ENCODE measurements at regions of chr19 and their contacts with region 1.

Region 1: GRCh38 chr19:40640744-40641143 is 39.6 kb downstream of the LTBP4 start:
- DNase-seq: peak; percentile 71
- H3K4me3 ChIP-seq: no peak overlapping the region
- H3K27ac ChIP-seq: peak overlapping the region; percentile 46 to 70 (median 56)
- H3K4me1 ChIP-seq: peaks cover 0 to 23% (median 17%) of the 10 kb centered on the region in 4 donors
- H3K27me3 ChIP-seq: no peaks in the 10 kb centered on the region
- CTCF ChIP-seq: no peak
- EP300 ChIP-seq: no peak
- POLR2A ChIP-seq: no peak

Region 2: DNA sequence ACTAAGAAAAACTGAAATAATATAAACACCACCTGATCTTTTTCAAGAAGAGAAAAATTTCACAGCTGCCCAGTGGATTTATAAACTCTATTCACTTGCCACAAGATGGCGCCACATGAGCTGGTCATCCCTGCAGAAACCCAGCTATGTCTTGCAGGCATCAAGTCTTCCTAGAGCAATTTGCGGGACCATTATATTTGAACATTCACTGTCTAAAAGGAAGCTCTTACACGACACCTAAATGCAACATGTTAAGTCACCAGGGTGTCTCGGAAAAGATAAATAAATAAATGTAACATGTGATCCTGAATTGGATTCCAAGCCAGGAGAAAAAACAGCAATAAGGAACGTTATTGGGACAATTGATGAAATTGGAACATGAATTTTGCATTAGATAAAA is 335.3 kb before region 1 on chr19:
- intact Hi-C with region 1: loop called (anchors 2 kb)
- DNase-seq: peak; percentile 89
- H3K4me3 ChIP-seq: no peak overlapping the region
- H3K27ac ChIP-seq: no peak overlapping the region
- H3K4me1 ChIP-seq: peaks cover 0 to 3% (median 0%) of the 10 kb centered on the region in 4 donors
- H3K27me3 ChIP-seq: no peaks in the 10 kb centered on the region
- CTCF ChIP-seq: peak; percentile 40 to 62 (median 58)
- EP300 ChIP-seq: no peak
- POLR2A ChIP-seq: no peak

Region 3: GRCh38 chr19:40549007-40549708 is 91.6 kb before region 1 on chr19:
- intact Hi-C with region 1: no loop called
- DNase-seq: peak; percentile 75
- H3K4me3 ChIP-seq: no peak overlapping the region
- H3K27ac ChIP-seq: no peak overlapping the region
- H3K4me1 ChIP-seq: peaks cover 0 to 10% (median 4%) of the 10 kb centered on the region in 4 donors
- H3K27me3 ChIP-seq: peaks cover 3 to 46% (median 21%) of the 10 kb centered on the region in 3 donors
- CTCF ChIP-seq: peak; percentile 7 to 42 (median 18)
- EP300 ChIP-seq: no peak
- POLR2A ChIP-seq: no peak

Region 4: GRCh38 chr19:40603389-40604135 is 37.2 kb before region 1 on chr19:
- intact Hi-C with region 1: loop called (anchors 5 kb)
- DNase-seq: peak; percentile 99
- H3K4me3 ChIP-seq: peak overlapping the region; percentile 37 to 61 (median 53)
- H3K27ac ChIP-seq: peak overlapping the region; percentile 71 to 85 (median 84)
- H3K4me1 ChIP-seq: peaks cover 0 to 73% (median 69%) of the 10 kb centered on the region in 4 donors
- H3K27me3 ChIP-seq: peaks cover 3 to 18% (median 11%) of the 10 kb centered on the region in 3 donors
- CTCF ChIP-seq: no peak
- EP300 ChIP-seq: no peak
- POLR2A ChIP-seq: peak in 1 of 2 donors; percentile 30

Region 5: DNA sequence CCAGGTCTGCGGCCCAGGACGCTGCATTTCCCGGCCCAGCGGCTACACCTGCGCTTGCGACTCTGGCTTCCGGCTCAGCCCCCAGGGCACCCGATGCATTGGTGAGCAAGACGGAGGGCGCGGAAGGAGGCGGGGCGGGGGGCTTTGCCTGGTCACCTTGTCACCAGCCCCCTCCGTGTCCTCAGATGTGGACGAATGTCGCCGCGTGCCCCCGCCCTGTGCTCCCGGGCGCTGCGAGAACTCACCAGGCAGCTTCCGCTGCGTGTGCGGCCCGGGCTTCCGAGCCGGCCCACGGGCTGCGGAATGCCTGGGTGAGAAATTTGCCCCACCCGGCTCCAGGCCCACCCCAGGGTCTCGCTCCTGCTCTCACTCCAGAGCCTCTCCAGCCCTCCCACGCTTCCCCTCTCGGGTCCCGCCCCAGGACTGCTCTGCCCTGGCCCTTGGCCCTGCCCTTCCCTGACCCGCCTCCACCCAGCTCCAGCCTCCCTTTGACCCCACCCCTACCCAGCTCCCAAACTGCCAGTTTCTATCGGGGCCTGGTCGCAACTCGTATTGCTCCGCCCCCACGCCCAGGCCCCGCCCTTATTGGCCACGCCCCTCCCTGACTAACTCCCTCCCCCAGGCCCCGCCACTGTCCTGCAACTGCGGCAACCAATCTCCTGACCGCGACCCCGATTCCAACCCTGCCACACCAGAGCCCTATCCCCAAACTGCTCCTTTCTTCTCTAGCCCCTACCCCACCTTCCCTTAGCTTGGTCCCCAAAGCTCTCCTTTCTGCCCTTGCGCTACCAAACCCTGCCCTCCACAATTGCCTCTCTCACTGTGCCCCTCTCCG is 31.0 kb before region 1 on chr19:
- intact Hi-C with region 1: loop called (anchors 2 kb)
- DNase-seq: peak; percentile 96
- H3K4me3 ChIP-seq: peak overlapping the region; percentile 28 to 46 (median 34)
- H3K27ac ChIP-seq: peak overlapping the region; percentile 50 to 87 (median 66)
- H3K4me1 ChIP-seq: peaks cover 0 to 51% (median 41%) of the 10 kb centered on the region in 4 donors
- H3K27me3 ChIP-seq: peaks cover 10 to 35% (median 31%) of the 10 kb centered on the region in 3 donors
- CTCF ChIP-seq: no peak
- EP300 ChIP-seq: no peak
- POLR2A ChIP-seq: peak in 1 of 2 donors; percentile 39

Region 6: GRCh38 chr19:40623403-40624251 is 17.1 kb before region 1 on chr19:
- intact Hi-C with region 1: no loop called
- DNase-seq: no peak
- H3K4me3 ChIP-seq: no peak overlapping the region
- H3K27ac ChIP-seq: peak overlapping the region in 2 of 4 donors; percentile 23 to 32
- H3K4me1 ChIP-seq: peaks cover 0 to 4% (median 0%) of the 10 kb centered on the region in 4 donors
- H3K27me3 ChIP-seq: no peaks in the 10 kb centered on the region
- CTCF ChIP-seq: no peak
- EP300 ChIP-seq: no peak
- POLR2A ChIP-seq: no peak